Ascending aorta (tissue), 2 donors: ENCODE measurements at regions of chr22 and their contacts with region 1.

Region 1: GRCh38 chr22:35350539-35351503 is 30.1 kb upstream of the HMOX1 start:
- DNase-seq: peak; percentile 77 to 96
- H3K4me3 ChIP-seq: peak overlapping the region; percentile 53 to 74
- H3K27ac ChIP-seq: peak overlapping the region; percentile 81 to 84
- H3K4me1 ChIP-seq: peaks cover 0 to 25% of the 10 kb centered on the region in 2 donors
- H3K27me3 ChIP-seq: no peaks in the 10 kb centered on the region
- CTCF ChIP-seq: peak; percentile 91 to 97 (median 93)

Region 2: GRCh38 chr22:35380547-35381423 is 30.0 kb after region 1 on chr22 and contains the start of gene HMOX1:
- intact Hi-C with region 1: loop called (anchors 2 kb)
- DNase-seq: peak; percentile 84 to 96
- H3K4me3 ChIP-seq: peak within 1 kb of the TSS; percentile 66 to 72
- H3K27ac ChIP-seq: peak within 1 kb of the TSS; percentile 77 to 87
- H3K4me1 ChIP-seq: peaks cover 5 to 29% of the 10 kb centered on the region in 2 donors
- H3K27me3 ChIP-seq: no peaks in the 10 kb centered on the region
- CTCF ChIP-seq: peak in 2 of 3 experiments; percentile 24 to 54
- total RNA-seq, gene HMOX1: 27.1 TPM

Region 3: DNA sequence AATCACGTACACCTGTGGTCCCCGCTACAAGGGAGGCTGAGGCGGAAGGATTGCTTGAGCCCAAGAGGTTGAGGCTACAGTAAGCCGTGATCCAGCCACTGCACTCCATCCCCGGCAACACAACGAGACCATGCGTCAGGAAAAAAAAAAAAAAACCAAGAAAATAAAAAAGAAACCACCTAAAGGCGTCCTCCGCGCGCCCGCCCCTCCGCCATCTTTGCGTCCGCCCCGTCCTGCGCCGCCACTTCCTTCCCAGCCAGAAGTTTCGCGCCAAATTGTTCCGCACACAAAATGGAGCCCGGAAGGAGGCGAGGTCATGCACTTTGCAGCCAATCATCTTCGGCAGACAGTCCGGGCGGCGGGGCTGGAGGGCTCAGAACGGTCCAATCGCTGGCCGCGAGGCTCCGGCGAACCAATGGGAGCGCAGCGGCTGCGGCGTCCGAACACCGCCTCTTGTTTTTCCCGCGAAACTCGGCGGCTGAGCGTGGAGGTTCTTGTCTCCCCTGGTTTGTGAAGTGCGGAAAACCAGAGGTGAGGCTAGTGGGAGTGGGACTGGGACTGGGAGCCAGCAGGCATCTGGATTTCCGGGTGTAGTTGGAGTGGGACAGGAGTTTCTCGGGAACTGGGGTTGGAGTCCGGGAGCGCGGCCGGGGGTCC is 49.0 kb after region 1 on chr22 and contains the start of gene MCM5:
- intact Hi-C with region 1: loop called (anchors 1 kb)
- DNase-seq: peak; percentile 89 to 98
- H3K4me3 ChIP-seq: peak within 1 kb of the TSS; percentile 63 to 91
- H3K27ac ChIP-seq: peak within 1 kb of the TSS; percentile 43 to 49
- H3K4me1 ChIP-seq: peaks cover 0 to 7% of the 10 kb centered on the region in 2 donors
- H3K27me3 ChIP-seq: no peaks in the 10 kb centered on the region
- CTCF ChIP-seq: no peak
- total RNA-seq, gene MCM5: 31.1 TPM

Region 4: GRCh38 chr22:35539910-35540594 is 189.2 kb after region 1 on chr22:
- intact Hi-C with region 1: loop called (anchors 1 kb)
- DNase-seq: peak in 1 of 2 donors; percentile 72
- H3K4me3 ChIP-seq: peak overlapping the region; percentile 66 to 71
- H3K27ac ChIP-seq: peak overlapping the region; percentile 77 to 84
- H3K4me1 ChIP-seq: peaks cover 10 to 14% of the 10 kb centered on the region in 2 donors
- H3K27me3 ChIP-seq: no peaks in the 10 kb centered on the region
- CTCF ChIP-seq: peak in 1 of 3 experiments; percentile 1

Region 5: DNA sequence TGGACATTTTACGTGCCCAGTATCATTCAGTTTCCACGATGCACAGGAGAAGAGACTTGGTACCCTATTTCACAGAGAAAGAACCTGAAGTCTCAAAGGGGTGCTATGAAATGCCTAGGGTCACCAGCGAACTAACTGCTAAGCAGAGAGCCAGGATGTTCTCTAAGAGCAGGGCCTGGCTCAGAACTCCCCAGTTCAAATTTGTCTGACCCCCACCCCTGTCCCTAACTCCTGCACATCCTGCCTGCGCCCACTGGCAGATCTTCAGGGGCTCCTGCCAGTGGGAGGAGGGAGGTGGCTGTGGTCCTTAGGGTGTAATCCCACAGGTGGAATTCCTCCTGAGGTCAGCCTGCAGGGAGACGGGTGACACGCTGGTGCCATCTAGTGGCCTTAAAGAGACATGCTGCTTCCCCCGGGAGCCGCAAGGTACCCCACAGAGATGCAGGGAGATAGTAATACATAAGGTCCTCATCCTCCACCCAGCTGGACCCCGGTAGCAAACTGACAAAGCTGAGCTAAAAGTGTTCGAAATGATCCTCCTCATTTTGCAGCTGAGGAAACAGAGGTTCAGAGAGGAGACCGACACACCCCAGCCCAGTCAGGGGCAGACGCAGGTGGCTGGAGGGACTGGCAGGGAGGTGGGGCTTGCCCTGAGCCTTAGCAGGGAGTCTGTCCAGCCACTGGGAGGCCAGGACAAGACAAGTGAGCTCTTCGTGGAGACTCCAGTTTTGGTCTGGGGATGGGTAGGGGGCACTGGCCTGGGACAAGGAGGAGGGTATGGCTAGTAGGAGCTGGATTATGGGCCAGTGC is 232.2 kb after region 1 on chr22:
- intact Hi-C with region 1: loop called (anchors 1 kb)
- DNase-seq: no peak
- H3K4me3 ChIP-seq: no peak overlapping the region
- H3K27ac ChIP-seq: no peak overlapping the region
- H3K4me1 ChIP-seq: no peaks in the 10 kb centered on the region
- H3K27me3 ChIP-seq: no peaks in the 10 kb centered on the region
- CTCF ChIP-seq: peak; percentile 85 to 95 (median 90)

Region 6: DNA sequence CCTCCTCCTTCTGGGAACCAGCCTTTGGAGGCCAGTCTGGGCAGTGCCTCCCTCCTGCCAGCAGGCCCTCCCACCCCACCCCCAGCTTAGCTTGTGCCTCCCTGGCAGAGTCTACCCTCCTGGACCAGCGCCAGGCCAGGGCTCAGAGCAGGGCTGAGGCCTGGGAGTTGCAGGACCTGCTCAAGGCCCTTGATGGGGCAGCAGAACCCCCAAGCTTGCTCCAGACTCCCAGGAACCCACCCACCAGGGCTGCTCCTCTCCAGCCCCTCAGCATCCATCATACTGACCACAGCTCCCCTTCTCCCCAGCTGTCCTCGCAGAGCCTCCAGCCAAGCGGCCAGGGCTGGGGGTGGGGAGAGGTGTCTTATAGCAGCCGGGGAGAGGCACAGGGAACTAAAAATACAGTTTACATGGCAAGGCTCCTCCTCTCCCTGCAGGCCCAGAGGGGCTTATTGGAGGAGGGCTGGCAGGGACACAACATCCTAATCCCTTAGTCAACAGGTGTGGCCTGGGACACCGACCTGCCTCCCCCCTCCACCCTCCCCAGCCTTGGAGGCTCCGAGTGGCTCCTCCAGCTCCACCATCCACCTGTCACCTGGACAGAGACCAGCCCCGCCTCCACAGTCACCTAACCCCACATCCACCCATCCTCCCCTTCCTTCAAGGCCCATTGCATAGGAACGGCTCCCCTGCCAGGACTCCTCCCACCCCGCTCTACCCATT is 271.5 kb after region 1 on chr22:
- intact Hi-C with region 1: loop called (anchors 2 kb)
- DNase-seq: no peak
- H3K4me3 ChIP-seq: no peak overlapping the region
- H3K27ac ChIP-seq: no peak overlapping the region
- H3K4me1 ChIP-seq: peaks cover 0 to 17% of the 10 kb centered on the region in 2 donors
- H3K27me3 ChIP-seq: no peaks in the 10 kb centered on the region
- CTCF ChIP-seq: no peak